GM10248 (cell line): ENCODE measurements at regions of chr10 and their contacts with region 1.

Region 1: DNA sequence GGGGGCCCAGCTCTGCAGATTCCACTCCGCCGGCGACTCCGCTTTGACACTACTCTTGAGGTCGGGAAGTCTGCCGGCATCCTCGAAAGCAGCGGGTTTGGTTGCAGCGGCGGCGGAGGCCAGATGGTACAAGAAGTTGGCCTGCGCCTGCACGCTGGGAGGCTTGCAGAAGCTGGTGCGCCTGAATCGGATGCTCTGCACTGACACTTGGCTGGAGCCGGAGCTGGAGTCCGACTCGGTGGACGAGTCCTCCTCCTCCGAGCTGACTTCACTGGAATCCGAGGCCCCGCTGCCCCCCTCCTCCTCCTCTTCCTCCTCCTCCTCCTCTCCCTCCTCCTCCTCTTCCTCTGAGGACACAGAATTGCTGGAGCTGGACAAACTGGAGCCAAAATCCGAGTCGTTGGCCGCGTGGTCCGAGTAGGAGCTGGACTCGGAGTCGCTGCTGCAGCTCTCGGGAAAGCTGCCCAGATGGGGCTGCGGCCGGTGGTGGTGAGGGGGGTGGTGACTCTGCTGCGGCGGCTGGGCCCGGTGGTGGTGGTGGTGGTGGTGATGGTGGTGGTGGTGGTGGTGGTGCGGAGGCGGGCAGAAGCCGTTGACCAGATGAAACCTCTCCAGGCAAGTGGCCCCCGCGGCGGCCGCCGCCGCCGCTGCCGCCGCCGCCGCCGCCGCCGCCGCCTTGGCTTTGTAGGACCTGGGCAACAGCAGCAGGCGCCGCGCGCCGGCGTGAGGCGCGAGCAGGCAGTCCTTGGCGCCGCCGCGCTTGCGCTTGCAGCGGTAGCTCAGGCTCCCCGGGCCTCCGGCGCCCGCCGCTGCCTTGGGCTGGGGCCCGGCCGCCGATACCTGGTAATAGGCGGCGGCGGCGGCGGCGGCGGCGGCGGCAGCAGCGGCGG is 9.0 kb downstream of the SKIDA1 start:
- DNase-seq: no peak
- CTCF ChIP-seq: no peak

Region 2: GRCh38 chr10:21184216-21184615 is 332.3 kb before region 1 on chr10:
- CTCF ChIA-PET with region 1: no interaction called
- POLR2A ChIA-PET with region 1: no interaction called
- DNase-seq: no peak
- CTCF ChIP-seq: no peak

Region 3: GRCh38 chr10:21458126-21458871 is 58.2 kb before region 1 on chr10:
- CTCF ChIA-PET with region 1: no interaction called
- POLR2A ChIA-PET with region 1: no interaction called
- DNase-seq: no peak
- CTCF ChIP-seq: no peak

Region 4: GRCh38 chr10:21495752-21496342 is 20.6 kb before region 1 on chr10:
- CTCF ChIA-PET with region 1: interaction called, 18 read pairs
- POLR2A ChIA-PET with region 1: interaction called, 4 read pairs
- DNase-seq: peak; percentile 94
- CTCF ChIP-seq: peak; percentile 95